CD8-positive, alpha-beta T cell (primary cell): ENCODE measurements at regions of chr7 and their contacts with region 1.

Region 1: DNA sequence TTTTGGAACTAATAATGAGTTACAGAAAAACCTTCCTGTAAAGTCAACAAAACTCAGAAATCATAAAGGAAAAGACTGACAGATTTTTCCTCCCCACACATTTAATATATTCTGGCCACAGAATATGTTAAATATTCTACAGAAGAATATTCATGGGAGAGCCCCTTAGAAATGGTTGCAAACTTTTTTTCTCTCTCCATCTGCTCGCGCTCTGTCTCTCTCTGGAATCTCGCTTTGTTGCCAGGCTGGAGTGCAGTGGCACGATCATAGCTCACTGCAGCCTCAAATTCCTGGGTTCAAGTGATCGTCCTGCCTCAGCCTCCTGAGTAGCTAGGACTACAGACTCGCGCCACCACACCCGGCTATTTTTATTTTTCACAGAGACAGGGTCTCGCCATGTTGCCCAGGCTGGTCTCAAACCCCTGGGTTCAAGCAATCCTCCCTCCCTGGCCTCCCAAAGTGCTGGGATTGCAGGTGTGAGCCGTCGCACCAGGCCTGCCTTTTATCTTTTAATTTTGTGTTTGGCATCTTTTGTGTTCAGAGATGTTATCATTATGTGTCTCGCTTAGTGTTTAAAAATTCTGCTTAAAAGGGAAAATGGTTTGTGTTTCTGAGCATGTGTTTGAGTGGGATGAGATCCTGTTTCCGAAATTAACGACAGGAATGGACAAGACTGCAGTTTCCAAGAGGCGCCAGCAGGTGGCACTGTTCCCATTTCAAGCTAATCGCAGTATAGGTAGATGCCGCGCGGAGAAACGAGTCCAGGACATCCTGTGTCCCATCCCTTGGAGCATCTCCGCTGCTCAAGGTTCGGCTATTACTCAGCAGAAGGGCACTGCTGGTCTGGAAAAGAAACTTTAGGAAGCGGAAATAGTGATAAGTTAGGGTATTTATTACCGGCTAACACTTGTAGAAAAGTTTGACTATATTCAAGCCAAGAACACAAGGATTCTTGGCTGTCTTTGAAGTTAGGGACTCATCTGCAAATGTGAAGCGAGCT is 23.1 kb upstream of the ST7 start:
- DNase-seq: peak; percentile 46 to 85 (median 78)
- ATAC-seq: peak; percentile 93
- H3K4me3 ChIP-seq: no peak overlapping the region
- H3K4me3 Mint-ChIP-seq: no peak overlapping the region
- H3K27ac ChIP-seq: no peak overlapping the region
- H3K27ac Mint-ChIP-seq: no peak overlapping the region
- H3K4me1 ChIP-seq: no peaks in the 10 kb centered on the region
- H3K4me1 Mint-ChIP-seq: peaks cover 3% of the 10 kb centered on the region
- H3K27me3 ChIP-seq: peaks cover 0 to 2% of the 10 kb centered on the region in 2 experiments
- H3K27me3 Mint-ChIP-seq: peaks cover 7% of the 10 kb centered on the region
- CTCF ChIP-seq: peak; percentile 92

Region 2: DNA sequence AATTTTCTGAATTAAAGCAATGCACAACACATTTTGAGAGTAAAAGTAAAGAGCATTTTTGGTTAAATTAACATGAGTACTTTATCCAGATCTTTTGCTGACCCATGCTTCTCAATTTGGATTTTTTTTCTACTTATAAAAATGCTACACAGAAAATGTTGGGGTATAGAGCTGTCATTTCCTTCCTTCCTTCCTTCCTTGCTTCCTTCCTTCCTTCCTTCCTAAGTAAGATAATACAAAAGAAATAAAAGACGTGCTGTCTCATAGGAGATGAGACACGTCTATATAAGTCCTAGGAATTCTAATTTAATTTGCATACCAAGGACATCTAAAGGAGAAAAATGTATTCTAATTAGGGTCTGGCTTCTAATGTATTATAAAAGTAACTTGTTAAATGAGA is 461.7 kb before region 1 on chr7:
- CTCF ChIA-PET with region 1: no interaction called
- POLR2A ChIA-PET with region 1: no interaction called
- intact Hi-C with region 1: no loop called
- DNase-seq: no peak
- ATAC-seq: no peak
- H3K4me3 ChIP-seq: no peak overlapping the region
- H3K4me3 Mint-ChIP-seq: no peak overlapping the region
- H3K27ac ChIP-seq: no peak overlapping the region
- H3K27ac Mint-ChIP-seq: no peak overlapping the region
- H3K4me1 ChIP-seq: no peaks in the 10 kb centered on the region
- H3K4me1 Mint-ChIP-seq: no peaks in the 10 kb centered on the region
- H3K27me3 ChIP-seq: no peaks in the 10 kb centered on the region
- H3K27me3 Mint-ChIP-seq: peaks cover 8% of the 10 kb centered on the region
- CTCF ChIP-seq: no peak

Region 3: DNA sequence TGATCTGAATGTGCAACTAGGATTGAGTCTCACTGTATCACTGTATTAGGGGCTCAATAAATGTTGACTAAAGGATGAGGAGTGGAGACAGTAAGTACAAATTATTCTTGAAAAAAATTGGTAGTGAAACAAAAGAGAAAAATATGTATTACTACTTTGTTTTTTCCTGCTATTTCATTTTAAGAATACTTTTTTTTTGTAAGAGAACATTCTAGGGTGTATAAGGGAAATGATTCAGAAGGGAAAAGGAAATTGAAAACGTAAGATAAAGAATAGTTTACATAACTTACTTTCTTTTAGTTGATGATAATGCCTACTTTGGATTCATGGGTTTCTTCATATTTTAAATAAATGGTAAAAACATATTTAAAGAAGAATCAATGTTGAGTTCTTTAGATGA is 58.2 kb before region 1 on chr7:
- CTCF ChIA-PET with region 1: no interaction called
- POLR2A ChIA-PET with region 1: no interaction called
- intact Hi-C with region 1: no loop called
- DNase-seq: no peak
- ATAC-seq: no peak
- H3K4me3 ChIP-seq: no peak overlapping the region
- H3K4me3 Mint-ChIP-seq: peak overlapping the region; percentile 6
- H3K27ac ChIP-seq: no peak overlapping the region
- H3K27ac Mint-ChIP-seq: no peak overlapping the region
- H3K4me1 ChIP-seq: peaks cover 41% of the 10 kb centered on the region
- H3K4me1 Mint-ChIP-seq: peaks cover 75% of the 10 kb centered on the region
- H3K27me3 ChIP-seq: no peaks in the 10 kb centered on the region
- H3K27me3 Mint-ChIP-seq: no peaks in the 10 kb centered on the region
- CTCF ChIP-seq: no peak

Region 4: GRCh38 chr7:116911801-116912200 is 18.4 kb before region 1 on chr7:
- CTCF ChIA-PET with region 1: interaction called, 21 read pairs
- POLR2A ChIA-PET with region 1: interaction called, 3 read pairs
- intact Hi-C with region 1: no loop called
- DNase-seq: no peak
- ATAC-seq: no peak
- H3K4me3 ChIP-seq: no peak overlapping the region
- H3K4me3 Mint-ChIP-seq: no peak overlapping the region
- H3K27ac ChIP-seq: no peak overlapping the region
- H3K27ac Mint-ChIP-seq: no peak overlapping the region
- H3K4me1 ChIP-seq: no peaks in the 10 kb centered on the region
- H3K4me1 Mint-ChIP-seq: no peaks in the 10 kb centered on the region
- H3K27me3 ChIP-seq: no peaks in the 10 kb centered on the region
- H3K27me3 Mint-ChIP-seq: no peaks in the 10 kb centered on the region
- CTCF ChIP-seq: no peak

Region 5: GRCh38 chr7:117008883-117009531 is 78.8 kb after region 1 on chr7:
- CTCF ChIA-PET with region 1: interaction called, 5 read pairs
- POLR2A ChIA-PET with region 1: interaction called, 4 read pairs
- intact Hi-C with region 1: loop called (anchors 2 kb)
- DNase-seq: peak in 2 of 9 experiments; percentile 39 to 61
- ATAC-seq: peak; percentile 62
- H3K4me3 ChIP-seq: no peak overlapping the region
- H3K4me3 Mint-ChIP-seq: peak overlapping the region; percentile 66
- H3K27ac ChIP-seq: no peak overlapping the region
- H3K27ac Mint-ChIP-seq: no peak overlapping the region
- H3K4me1 ChIP-seq: peaks cover 61% of the 10 kb centered on the region
- H3K4me1 Mint-ChIP-seq: peaks cover 60% of the 10 kb centered on the region
- H3K27me3 ChIP-seq: no peaks in the 10 kb centered on the region
- H3K27me3 Mint-ChIP-seq: no peaks in the 10 kb centered on the region
- CTCF ChIP-seq: no peak

Region 6: DNA sequence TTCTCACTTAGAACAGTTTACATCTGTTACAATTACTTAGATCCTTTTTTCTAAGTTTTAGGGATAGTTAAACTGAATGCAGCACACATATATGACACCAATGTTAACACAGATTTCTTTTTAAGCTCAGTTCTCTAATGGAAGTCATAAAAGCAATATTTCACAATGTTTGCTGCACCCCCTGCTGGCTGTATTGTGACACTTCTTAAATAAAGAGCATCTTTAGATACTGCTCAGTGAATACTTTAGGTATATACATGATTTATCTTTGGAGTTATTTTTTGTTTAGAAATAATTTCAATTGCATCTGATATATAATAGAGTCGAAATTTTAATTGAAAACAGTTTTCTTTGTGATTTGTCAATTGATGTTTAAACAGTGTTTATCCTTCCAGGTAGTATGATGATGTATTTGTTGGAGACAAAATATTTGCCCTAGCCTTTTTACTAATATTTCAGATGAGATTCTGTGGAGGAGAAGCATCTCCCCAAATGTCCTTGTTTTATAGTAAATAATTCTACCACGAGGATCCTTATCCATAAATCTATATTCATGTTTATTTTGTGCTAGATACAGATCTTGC is 197.5 kb after region 1 on chr7:
- CTCF ChIA-PET with region 1: interaction called, 106 read pairs
- POLR2A ChIA-PET with region 1: no interaction called
- intact Hi-C with region 1: loop called (anchors 1 to 2 kb)
- DNase-seq: peak in 8 of 9 experiments; percentile 20 to 69 (median 51)
- ATAC-seq: peak; percentile 73
- H3K4me3 ChIP-seq: no peak overlapping the region
- H3K4me3 Mint-ChIP-seq: no peak overlapping the region
- H3K27ac ChIP-seq: no peak overlapping the region
- H3K27ac Mint-ChIP-seq: no peak overlapping the region
- H3K4me1 ChIP-seq: no peaks in the 10 kb centered on the region
- H3K4me1 Mint-ChIP-seq: peaks cover 3% of the 10 kb centered on the region
- H3K27me3 ChIP-seq: no peaks in the 10 kb centered on the region
- H3K27me3 Mint-ChIP-seq: no peaks in the 10 kb centered on the region
- CTCF ChIP-seq: peak; percentile 92

Region 7: DNA sequence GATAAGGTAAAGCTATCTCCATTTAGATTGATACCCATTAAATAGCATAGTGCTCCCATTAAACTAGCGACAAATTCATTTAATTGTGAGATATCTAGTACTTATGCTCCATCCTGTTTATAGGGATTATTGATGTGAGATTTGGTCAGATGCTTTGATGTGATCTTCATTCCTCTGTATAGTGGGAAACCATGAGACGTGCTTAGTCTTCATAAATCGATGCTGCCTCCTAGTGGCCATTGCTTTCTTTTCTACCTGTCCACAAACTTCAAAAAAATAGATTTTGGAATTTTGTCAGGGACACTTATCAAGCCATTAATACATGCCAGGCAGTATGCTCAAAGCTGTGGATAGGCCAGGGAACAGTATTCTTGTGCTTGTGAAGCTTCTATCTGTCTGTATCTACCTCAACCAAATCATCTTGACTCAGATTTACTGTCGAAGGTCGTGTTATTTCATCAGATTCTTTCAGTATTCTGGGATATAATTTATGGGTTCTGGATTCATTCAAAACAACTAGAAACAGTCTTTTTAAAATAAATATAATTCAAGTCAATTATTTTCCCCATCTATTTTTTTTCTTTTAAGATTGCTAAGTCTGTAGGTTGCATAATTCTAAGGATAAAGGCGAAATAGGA is 1265.7 kb after region 1 on chr7:
- CTCF ChIA-PET with region 1: no interaction called
- POLR2A ChIA-PET with region 1: no interaction called
- intact Hi-C with region 1: loop called in 1 of 2 experiments (anchors 10 kb)
- DNase-seq: peak in 7 of 9 experiments; percentile 9 to 78 (median 63)
- ATAC-seq: peak; percentile 83
- H3K4me3 ChIP-seq: no peak overlapping the region
- H3K4me3 Mint-ChIP-seq: no peak overlapping the region
- H3K27ac ChIP-seq: no peak overlapping the region
- H3K27ac Mint-ChIP-seq: peak overlapping the region; percentile 19
- H3K4me1 ChIP-seq: no peaks in the 10 kb centered on the region
- H3K4me1 Mint-ChIP-seq: peaks cover 6% of the 10 kb centered on the region
- H3K27me3 ChIP-seq: no peaks in the 10 kb centered on the region
- H3K27me3 Mint-ChIP-seq: no peaks in the 10 kb centered on the region
- CTCF ChIP-seq: peak; percentile 73